ENCODE measurements at regions of chr12 and their contacts with region 1.

Region 1: GRCh38 chr12:109899783-109900751 is at the start of gene TCHP:
- DNase-seq: peak; percentile 82
- H3K4me3 Mint-ChIP-seq: peak within 1 kb of the TSS; percentile 84
- H3K27ac Mint-ChIP-seq: peak within 1 kb of the TSS; percentile 94
- H3K4me1 Mint-ChIP-seq: peaks cover 31% of the 10 kb centered on the region
- H3K27me3 Mint-ChIP-seq: no peaks in the 10 kb centered on the region
- total RNA-seq, gene TCHP: 35.0 to 35.3 TPM

Region 2: DNA sequence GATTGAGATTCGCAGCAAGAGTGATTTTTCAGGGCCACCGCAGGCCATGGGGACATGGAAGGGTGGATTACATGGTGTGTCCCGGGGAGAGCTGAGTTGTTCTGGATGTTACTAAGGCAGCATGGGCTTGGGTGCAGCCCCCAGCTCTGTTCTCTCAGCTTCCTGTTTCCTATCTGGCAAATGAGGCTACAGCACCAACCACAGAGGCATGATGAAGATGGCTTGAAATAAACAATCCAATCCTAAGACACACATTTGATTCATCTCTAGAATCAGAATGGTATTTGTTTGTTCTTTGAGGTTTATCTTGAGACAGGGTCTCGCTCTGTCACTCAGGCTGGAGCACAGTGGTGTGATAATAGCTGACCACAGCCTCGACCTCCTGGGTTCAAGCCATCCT is 41.3 kb before region 1 on chr12:
- CTCF ChIA-PET with region 1: interaction called, 11 read pairs
- POLR2A ChIA-PET with region 1: no interaction called
- DNase-seq: no peak
- H3K4me3 Mint-ChIP-seq: no peak overlapping the region
- H3K27ac Mint-ChIP-seq: no peak overlapping the region
- H3K4me1 Mint-ChIP-seq: peaks cover 18% of the 10 kb centered on the region
- H3K27me3 Mint-ChIP-seq: no peaks in the 10 kb centered on the region

Region 3: GRCh38 chr12:109868936-109869220 is 31.2 kb before region 1 on chr12:
- CTCF ChIA-PET with region 1: no interaction called
- POLR2A ChIA-PET with region 1: no interaction called
- DNase-seq: no peak
- H3K4me3 Mint-ChIP-seq: no peak overlapping the region
- H3K27ac Mint-ChIP-seq: no peak overlapping the region
- H3K4me1 Mint-ChIP-seq: peaks cover 26% of the 10 kb centered on the region
- H3K27me3 Mint-ChIP-seq: no peaks in the 10 kb centered on the region

Region 4: DNA sequence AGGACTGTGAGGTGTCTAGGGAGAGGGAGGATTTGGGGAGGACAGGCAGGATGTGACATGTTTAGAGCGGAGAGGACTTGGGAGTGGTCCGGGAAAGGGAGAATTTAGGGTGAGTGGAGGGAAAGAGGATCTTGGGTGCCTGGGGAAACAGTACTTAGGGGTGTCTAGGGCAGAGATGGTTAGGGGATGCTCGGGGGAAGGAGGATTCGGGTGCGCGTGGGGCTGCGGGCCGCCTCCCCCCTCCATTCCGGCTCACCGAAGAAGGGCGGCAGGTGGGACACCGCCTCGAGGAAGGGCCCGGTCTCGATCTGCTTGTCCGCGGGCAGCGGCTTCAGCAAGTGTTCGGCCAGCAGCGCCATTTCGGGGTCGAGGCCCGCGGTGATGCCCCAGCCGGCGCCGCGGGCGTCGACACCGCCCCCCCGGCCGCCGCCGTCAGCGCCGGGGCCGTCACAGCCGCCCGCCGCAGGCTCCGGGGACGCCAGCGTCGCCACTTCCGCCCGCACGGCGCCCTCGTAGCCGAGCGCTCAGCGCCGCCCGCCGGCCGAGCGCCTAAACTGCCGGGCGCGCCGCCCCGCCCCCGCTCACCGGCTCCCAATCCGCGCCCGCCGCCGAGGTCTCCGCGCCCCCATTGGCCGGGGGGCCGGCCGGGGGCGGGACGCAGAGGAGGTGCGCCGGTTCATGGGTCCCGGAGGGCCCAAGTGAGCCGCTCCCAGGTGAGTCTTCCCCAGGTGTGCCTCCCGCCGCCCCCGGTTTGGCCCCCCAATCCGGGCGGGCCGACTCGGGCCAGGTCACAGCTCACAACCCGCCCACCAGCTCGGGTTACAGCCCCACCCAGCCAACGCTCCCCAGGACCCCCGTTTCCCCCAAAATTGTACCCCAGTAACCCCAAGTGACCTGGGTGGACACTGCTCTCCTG is 19.8 kb before region 1 on chr12 and contains the start of gene GLTP:
- CTCF ChIA-PET with region 1: interaction called, 4 read pairs
- POLR2A ChIA-PET with region 1: interaction called, 15 read pairs
- DNase-seq: peak; percentile 91
- H3K4me3 Mint-ChIP-seq: peak within 1 kb of the TSS; percentile 97
- H3K27ac Mint-ChIP-seq: peak within 1 kb of the TSS; percentile 76
- H3K4me1 Mint-ChIP-seq: peaks cover 62% of the 10 kb centered on the region
- H3K27me3 Mint-ChIP-seq: peaks cover 11% of the 10 kb centered on the region
- total RNA-seq, gene GLTP: 22.2 to 23.8 TPM

Region 5: GRCh38 chr12:109888179-109889020 is 11.7 kb before region 1 on chr12:
- CTCF ChIA-PET with region 1: interaction called, 10 read pairs
- POLR2A ChIA-PET with region 1: interaction called, 65 read pairs
- DNase-seq: peak; percentile 46
- H3K4me3 Mint-ChIP-seq: peak overlapping the region; percentile 55
- H3K27ac Mint-ChIP-seq: peak overlapping the region; percentile 99
- H3K4me1 Mint-ChIP-seq: peaks cover 50% of the 10 kb centered on the region
- H3K27me3 Mint-ChIP-seq: peaks cover 3% of the 10 kb centered on the region

Region 6: DNA sequence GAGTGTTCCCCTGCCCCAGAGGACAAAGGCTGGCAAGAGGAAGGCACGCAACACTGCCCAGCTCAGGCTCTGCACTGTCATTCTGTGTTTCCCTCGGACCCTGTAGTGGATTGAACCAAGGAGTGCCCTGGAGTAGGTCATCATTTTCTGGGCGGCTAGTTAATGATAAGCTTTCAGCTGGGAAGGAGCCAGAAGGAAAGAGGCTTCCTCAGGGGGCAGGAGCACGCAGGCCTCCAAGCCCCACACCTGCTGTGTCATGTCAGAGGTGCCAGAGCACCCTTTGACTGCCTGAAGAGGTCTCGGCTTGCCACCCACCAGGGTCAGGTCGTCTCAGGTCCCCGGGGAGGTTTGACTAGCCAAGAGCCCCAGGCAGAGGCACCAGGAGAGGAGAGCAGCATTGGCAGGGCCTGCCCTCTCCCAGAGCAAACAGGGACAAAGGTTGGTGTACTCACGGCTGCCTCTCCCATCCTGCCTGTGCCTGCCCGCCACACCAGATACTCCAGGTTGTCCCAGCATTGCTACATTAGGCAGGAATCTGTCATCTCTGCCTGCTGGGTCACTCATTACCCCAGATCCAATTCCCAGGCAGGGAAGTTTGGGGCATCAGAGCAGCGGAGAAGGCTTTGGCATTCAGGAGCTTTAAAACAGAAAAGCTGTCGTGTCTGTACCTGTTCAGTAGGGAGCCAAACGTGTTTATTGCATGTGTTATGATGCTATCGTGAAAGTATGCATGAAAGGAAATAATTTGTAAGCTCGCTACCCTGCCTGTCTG is 347.5 kb after region 1 on chr12:
- CTCF ChIA-PET with region 1: no interaction called
- POLR2A ChIA-PET with region 1: no interaction called
- DNase-seq: no peak
- H3K4me3 Mint-ChIP-seq: no peak overlapping the region
- H3K27ac Mint-ChIP-seq: no peak overlapping the region
- H3K4me1 Mint-ChIP-seq: no peaks in the 10 kb centered on the region
- H3K27me3 Mint-ChIP-seq: peaks cover 3% of the 10 kb centered on the region

Measured in activated CD4-positive, alpha-beta memory T cell treated with anti-CD3 and anti-CD28 coated beads, Interleukin-2, amount 10 ng/mL, durations not matched to agents 7 days and 5 days (primary cell).